CD4-positive, alpha-beta memory T cell (primary cell): ENCODE measurements at regions of chr4 and their contacts with region 1.

Region 1: GRCh38 chr4:38856524-38857337 is at the start of gene TLR6:
- DNase-seq: peak; percentile 70 to 81 (median 76)
- H3K4me3 ChIP-seq: peak within 1 kb of the TSS; percentile 4 to 43
- H3K4me3 Mint-ChIP-seq: peak within 1 kb of the TSS; percentile 74 to 87 (median 81)
- H3K27ac ChIP-seq: peak within 1 kb of the TSS; percentile 33
- H3K27ac Mint-ChIP-seq: peak within 1 kb of the TSS; percentile 80 to 93 (median 87)
- H3K4me1 ChIP-seq: peaks cover 30% of the 10 kb centered on the region
- H3K4me1 Mint-ChIP-seq: peaks cover 24 to 39% (median 31%) of the 10 kb centered on the region in 4 donors
- H3K27me3 ChIP-seq: no peaks in the 10 kb centered on the region
- H3K27me3 Mint-ChIP-seq: peaks cover 0 to 2% of the 10 kb centered on the region in 2 donors
- total RNA-seq, gene TLR6: 7.3 to 7.7 TPM

Region 2: GRCh38 chr4:38062088-38062893 is 794.4 kb before region 1 on chr4:
- CTCF ChIA-PET with region 1: interaction called, 3 read pairs
- POLR2A ChIA-PET with region 1: no interaction called
- intact Hi-C with region 1: loop called (anchors 1 kb)
- DNase-seq: peak; percentile 38 to 51 (median 49)
- H3K4me3 ChIP-seq: peak overlapping the region in 1 of 2 donors; percentile 42
- H3K4me3 Mint-ChIP-seq: peak overlapping the region; percentile 73 to 94 (median 87)
- H3K27ac ChIP-seq: no peak overlapping the region
- H3K27ac Mint-ChIP-seq: peak overlapping the region; percentile 20 to 91 (median 72)
- H3K4me1 ChIP-seq: peaks cover 4% of the 10 kb centered on the region
- H3K4me1 Mint-ChIP-seq: peaks cover 7 to 16% (median 8%) of the 10 kb centered on the region in 4 donors
- H3K27me3 ChIP-seq: no peaks in the 10 kb centered on the region
- H3K27me3 Mint-ChIP-seq: no peaks in the 10 kb centered on the region

Region 3: DNA sequence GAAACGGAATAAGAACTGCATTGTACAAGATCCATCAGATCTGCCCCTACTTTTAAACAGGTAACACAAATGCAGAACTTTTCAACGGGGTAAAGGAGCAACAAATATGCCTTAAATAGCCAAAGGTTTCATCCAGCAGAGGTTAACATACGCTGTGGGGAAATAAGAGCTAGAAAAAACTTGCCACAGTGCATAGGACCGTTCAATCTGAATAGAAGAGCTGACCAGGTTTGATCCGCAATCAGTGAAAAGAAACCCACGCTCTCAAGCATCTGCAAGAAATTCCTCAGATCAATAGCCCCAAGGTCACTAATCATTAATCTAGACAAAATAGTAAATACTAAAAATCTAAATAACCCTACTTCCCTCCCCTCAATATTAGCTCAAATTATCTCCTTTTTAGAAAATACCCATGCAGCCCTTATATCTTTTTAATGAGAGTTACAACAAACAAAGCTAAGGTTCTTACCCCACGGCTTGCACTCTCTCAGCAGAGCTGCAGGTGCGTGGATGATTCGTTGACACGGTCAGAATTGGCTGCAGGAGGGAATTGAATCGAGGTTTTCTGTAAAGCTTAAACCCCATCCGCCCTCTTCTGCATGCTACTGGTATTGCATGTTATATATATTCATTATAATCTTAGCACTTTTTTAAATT is 74.2 kb before region 1 on chr4 and contains the start of gene TLR10:
- CTCF ChIA-PET with region 1: interaction called, 36 read pairs
- POLR2A ChIA-PET with region 1: interaction called, 7 read pairs
- intact Hi-C with region 1: loop called (anchors 1 kb)
- DNase-seq: peak in 4 of 5 donors; percentile 26 to 50 (median 40)
- H3K4me3 ChIP-seq: no peak within 1 kb of the TSS
- H3K4me3 Mint-ChIP-seq: peak within 1 kb of the TSS in 4 of 8 donors; percentile 22 to 62 (median 43)
- H3K27ac ChIP-seq: no peak within 1 kb of the TSS
- H3K27ac Mint-ChIP-seq: no peak within 1 kb of the TSS
- H3K4me1 ChIP-seq: no peaks in the 10 kb centered on the region
- H3K4me1 Mint-ChIP-seq: peaks cover 2 to 5% (median 3%) of the 10 kb centered on the region in 4 donors
- H3K27me3 ChIP-seq: no peaks in the 10 kb centered on the region
- H3K27me3 Mint-ChIP-seq: peaks cover 0 to 2% of the 10 kb centered on the region in 2 donors
- total RNA-seq, gene TLR10: 0.20 to 0.28 TPM

Region 4: DNA sequence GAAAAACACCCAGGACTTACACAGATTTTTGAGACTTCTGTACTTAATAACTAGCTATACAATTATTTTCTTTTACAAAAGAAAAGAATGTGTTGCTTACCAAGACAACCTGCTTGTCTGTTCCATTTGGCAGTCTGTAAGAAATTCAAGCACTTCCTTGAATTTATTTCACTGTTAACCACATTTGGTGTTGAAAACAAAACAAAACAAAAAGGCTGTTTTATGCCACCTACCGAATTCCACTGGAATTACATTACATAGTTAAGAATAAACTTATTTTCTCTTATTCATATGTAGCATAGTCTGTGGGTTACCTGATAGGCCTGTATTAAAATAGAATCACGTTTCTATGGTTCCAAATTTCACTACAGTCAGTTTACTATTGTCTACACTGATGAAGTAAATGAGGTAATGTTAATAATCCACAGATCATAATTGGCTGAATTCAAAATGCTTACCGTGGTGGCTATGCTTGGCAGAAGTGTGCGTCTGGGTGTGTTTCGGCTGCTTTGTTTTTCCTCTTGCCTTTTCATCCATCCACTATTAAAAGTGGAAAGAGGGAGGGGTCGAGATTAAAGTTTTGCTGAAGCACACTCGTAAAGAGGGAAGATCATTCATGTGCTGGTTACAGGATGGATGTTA is 52.0 kb before region 1 on chr4 and contains the start of gene TLR1:
- CTCF ChIA-PET with region 1: interaction called, 51 read pairs
- POLR2A ChIA-PET with region 1: interaction called, 24 read pairs
- intact Hi-C with region 1: loop called (anchors 1 kb)
- DNase-seq: peak in 4 of 5 donors; percentile 65 to 71 (median 65)
- H3K4me3 ChIP-seq: peak within 1 kb of the TSS; percentile 54 to 57
- H3K4me3 Mint-ChIP-seq: peak within 1 kb of the TSS; percentile 90 to 96 (median 92)
- H3K27ac ChIP-seq: peak within 1 kb of the TSS; percentile 47
- H3K27ac Mint-ChIP-seq: peak within 1 kb of the TSS; percentile 84 to 99 (median 94)
- H3K4me1 ChIP-seq: peaks cover 25% of the 10 kb centered on the region
- H3K4me1 Mint-ChIP-seq: peaks cover 24 to 45% (median 35%) of the 10 kb centered on the region in 4 donors
- H3K27me3 ChIP-seq: no peaks in the 10 kb centered on the region
- H3K27me3 Mint-ChIP-seq: no peaks in the 10 kb centered on the region
- total RNA-seq, gene TLR1: 20.6 to 24.3 TPM

Region 5: DNA sequence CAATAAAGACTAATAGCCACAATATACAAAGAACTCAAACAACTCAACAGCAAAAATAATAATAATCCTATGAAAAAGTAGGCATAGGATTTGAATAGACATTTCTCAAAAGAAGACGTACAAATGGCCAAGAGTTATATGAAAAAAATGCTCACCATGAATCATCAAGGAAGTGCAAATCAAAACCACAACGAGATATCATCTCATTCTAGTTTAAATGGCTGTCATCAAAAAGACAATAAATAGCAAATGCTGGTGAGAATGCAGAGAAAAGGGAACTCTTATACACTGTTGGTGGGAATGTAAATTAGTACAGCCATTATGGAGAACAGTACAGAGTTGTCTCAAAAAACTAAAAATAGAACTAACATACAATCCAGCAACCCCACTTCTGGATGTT is 18.9 kb before region 1 on chr4:
- CTCF ChIA-PET with region 1: interaction called, 5 read pairs
- POLR2A ChIA-PET with region 1: interaction called, 7 read pairs
- intact Hi-C with region 1: loop called (anchors 1 kb)
- DNase-seq: peak in 4 of 5 donors; percentile 50 to 64 (median 60)
- H3K4me3 ChIP-seq: no peak overlapping the region
- H3K4me3 Mint-ChIP-seq: peak overlapping the region in 7 of 8 donors; percentile 4 to 78 (median 59)
- H3K27ac ChIP-seq: no peak overlapping the region
- H3K27ac Mint-ChIP-seq: peak overlapping the region in 6 of 7 donors; percentile 5 to 82 (median 58)
- H3K4me1 ChIP-seq: peaks cover 18% of the 10 kb centered on the region
- H3K4me1 Mint-ChIP-seq: peaks cover 18 to 26% (median 22%) of the 10 kb centered on the region in 4 donors
- H3K27me3 ChIP-seq: no peaks in the 10 kb centered on the region
- H3K27me3 Mint-ChIP-seq: no peaks in the 10 kb centered on the region

Region 6: GRCh38 chr4:38872604-38873006 is 15.9 kb after region 1 on chr4:
- CTCF ChIA-PET with region 1: interaction called, 12 read pairs
- POLR2A ChIA-PET with region 1: no interaction called
- intact Hi-C with region 1: no loop called
- DNase-seq: no peak
- H3K4me3 ChIP-seq: no peak overlapping the region
- H3K4me3 Mint-ChIP-seq: no peak overlapping the region
- H3K27ac ChIP-seq: no peak overlapping the region
- H3K27ac Mint-ChIP-seq: no peak overlapping the region
- H3K4me1 ChIP-seq: no peaks in the 10 kb centered on the region
- H3K4me1 Mint-ChIP-seq: peaks cover 0 to 8% (median 5%) of the 10 kb centered on the region in 4 donors
- H3K27me3 ChIP-seq: no peaks in the 10 kb centered on the region
- H3K27me3 Mint-ChIP-seq: peaks cover 10 to 14% of the 10 kb centered on the region in 2 donors